Naive thymus-derived CD8-positive, alpha-beta T cell (primary cell): ENCODE measurements at regions of chr6 and their contacts with region 1.

Region 1: GRCh38 chr6:157379656-157380454 is 1.1 kb upstream of the ZDHHC14 start:
- DNase-seq: peak; percentile 72 to 93 (median 85)
- ATAC-seq: peak; percentile 71 to 79
- H3K4me3 Mint-ChIP-seq: peak overlapping the region; percentile 74 to 96 (median 84)
- H3K27ac Mint-ChIP-seq: peak overlapping the region in 9 of 10 donors; percentile 19 to 88 (median 80)
- H3K4me1 Mint-ChIP-seq: peaks cover 9 to 24% (median 17%) of the 10 kb centered on the region in 4 donors
- H3K27me3 Mint-ChIP-seq: peaks cover 0 to 20% (median 5%) of the 10 kb centered on the region in 5 donors

Region 2: DNA sequence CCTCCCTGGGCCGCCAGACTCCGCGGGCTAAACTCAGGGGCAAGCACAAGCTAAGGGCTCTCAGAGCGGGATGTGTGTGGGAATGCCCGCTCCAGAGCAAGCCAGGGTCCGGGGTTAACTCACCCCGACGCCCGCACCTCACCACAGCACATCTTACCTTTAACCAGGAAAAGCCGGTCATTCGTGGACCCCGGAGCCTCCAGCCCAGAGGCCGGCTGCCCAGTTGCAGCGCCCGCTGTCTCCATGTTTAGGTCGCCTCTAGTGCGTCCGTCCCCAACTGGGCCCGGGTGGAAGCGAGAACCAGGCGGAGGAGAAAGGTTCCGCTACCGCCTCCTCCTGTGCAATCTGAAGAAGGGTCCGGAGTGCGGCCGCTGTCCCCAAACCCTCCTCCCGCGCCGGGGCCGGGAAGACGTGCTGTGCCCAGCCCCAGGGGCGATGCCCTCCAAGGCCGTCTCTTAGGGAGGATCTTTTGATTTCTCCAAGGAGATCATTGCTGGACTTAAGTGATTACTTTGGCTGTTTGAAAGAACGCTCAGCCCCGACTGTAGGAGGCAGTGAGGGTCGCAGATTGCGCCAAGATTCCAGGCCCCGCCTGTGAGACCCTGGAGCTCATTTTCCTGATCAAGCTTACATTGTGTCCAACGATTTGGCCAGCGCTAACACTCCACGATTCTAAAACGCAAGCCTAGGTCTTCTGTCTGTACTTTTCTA is 56.4 kb before region 1 on chr6 and contains the start of gene TMEM242:
- POLR2A ChIA-PET with region 1: interaction called, 26 read pairs
- DNase-seq: peak; percentile 66 to 92 (median 82)
- ATAC-seq: peak; percentile 91 to 94
- H3K4me3 Mint-ChIP-seq: peak within 1 kb of the TSS; percentile 92 to 98 (median 96)
- H3K27ac Mint-ChIP-seq: peak within 1 kb of the TSS; percentile 85 to 95 (median 92)
- H3K4me1 Mint-ChIP-seq: peaks cover 6 to 26% (median 18%) of the 10 kb centered on the region in 4 donors
- H3K27me3 Mint-ChIP-seq: peaks cover 0 to 16% (median 5%) of the 10 kb centered on the region in 5 donors
- polyA plus RNA-seq, gene TMEM242: 9.5 to 14.3 (median 10.8) TPM

Region 3: DNA sequence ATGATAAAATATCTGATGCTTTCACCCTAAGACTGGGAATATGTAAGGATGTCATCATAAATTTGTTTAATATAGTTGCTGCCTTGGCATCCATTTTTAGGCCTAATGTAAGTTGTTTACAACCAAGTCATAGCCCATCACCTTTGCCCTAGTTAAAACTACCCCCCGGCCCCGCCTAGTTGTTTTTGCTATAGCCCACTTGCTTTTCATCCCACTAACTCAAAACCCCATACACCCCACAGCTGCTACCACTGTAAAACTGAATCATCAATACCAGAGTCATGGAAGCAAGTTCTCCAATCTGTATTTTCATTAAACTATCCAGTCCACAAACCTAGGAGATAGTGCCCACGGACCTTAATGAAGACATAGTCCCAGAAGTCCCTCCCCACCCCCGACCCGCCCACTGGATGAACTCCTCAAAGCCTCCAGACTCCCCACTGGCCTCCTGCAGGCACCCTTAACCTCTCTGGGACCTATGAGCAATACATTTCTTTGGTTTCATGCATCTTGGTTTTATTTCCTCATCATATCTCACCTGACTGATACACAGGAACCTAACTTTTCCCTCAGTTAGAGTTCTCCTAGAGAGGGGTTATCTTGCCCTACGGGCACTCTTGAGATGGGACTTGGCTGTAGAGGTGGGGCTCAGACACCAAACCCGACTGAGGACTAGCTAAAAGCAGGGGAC is 11.4 kb before region 1 on chr6:
- POLR2A ChIA-PET with region 1: interaction called, 15 read pairs
- DNase-seq: no peak
- ATAC-seq: no peak
- H3K4me3 Mint-ChIP-seq: peak overlapping the region in 1 of 10 donors; percentile 11
- H3K27ac Mint-ChIP-seq: peak overlapping the region in 2 of 10 donors; percentile 40 to 53
- H3K4me1 Mint-ChIP-seq: peaks cover 9 to 21% (median 18%) of the 10 kb centered on the region in 4 donors
- H3K27me3 Mint-ChIP-seq: peaks cover 22 to 48% (median 37%) of the 10 kb centered on the region in 5 donors